ENCODE measurements at regions of chr17 and their contacts with region 1.

Region 1: DNA sequence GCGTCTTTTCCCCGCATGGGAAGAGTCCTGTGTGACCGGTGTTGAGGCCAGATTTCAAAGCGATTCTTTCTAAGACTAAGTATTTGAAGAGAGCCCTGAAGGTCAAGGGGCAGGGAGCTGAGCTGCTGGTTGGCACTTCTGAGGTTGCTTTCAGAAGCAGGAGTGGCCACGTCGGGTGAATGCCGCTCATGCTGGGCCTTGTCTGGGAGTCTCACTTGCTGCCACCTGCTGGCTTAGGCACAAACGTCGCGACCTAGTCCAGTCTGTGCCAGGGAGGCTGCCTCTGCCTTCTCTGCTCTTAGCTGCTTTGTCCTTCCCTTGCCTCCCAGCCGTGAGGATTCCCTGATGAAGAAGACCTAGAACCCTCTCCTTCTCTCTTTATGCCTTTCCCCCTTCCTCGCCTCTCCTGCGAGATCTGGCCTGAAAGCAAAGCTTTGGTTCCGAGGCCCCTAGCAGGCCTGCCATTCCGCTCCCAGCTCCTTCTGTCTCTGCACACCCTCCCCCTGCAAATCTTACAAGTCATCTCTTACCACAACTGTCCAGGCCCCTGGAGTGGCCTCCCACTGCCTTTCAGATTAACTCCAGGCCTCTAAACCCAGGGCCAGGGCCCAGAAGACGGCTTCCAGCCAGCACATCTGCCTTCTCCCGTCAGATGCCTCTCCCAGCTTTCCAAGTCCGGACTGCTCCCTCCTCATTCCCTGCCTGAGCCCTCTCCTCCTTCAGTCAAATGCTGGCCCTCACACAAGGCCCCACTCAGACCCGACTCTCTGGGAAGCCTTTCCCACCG is 11.4 kb downstream of the CTNS start:
- DNase-seq: peak; percentile 77
- ATAC-seq: peak; percentile 67

Region 2: DNA sequence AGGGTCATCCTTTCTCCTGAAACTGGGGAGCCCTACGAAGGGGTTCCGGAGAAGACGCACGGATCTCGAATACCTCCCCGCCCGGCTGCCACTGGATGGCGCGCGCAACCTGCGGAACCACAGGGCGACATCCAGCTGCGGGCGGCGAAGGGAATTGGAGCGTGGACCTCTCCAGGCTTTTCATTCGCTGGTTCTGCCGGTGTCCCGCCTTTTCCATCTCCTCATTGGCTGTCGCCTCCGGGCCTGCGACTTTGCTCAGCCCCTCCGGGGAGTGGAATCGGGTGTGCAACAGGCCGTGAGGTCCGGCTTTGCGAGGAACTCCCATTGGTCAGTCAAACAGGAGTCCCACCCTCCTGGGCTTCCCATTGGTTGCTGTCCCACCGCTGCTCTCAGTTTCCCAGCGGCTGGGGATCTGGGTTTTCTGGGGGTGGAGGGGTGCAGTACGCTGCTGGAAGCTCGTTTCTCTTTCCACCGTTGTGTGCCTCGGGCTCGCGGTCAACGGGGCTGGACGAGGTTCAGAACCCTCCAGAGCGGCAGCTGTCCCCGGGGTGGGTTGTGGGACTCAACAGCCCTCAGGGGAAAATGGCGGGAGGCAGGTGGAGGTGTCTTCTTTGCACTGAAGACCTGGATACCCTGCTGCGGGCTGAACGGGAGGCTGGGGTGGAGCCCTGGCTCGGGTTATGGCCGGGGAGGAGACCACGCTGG is 599.0 kb before region 1 on chr17:
- intact Hi-C with region 1: loop called (anchors 5 kb)
- DNase-seq: peak; percentile 98
- ATAC-seq: peak; percentile 100

Measured in Right ventricle myocardium inferior (tissue), 1 donor.